ENCODE measurements at regions of chr1 and their contacts with region 1.

Region 1: DNA sequence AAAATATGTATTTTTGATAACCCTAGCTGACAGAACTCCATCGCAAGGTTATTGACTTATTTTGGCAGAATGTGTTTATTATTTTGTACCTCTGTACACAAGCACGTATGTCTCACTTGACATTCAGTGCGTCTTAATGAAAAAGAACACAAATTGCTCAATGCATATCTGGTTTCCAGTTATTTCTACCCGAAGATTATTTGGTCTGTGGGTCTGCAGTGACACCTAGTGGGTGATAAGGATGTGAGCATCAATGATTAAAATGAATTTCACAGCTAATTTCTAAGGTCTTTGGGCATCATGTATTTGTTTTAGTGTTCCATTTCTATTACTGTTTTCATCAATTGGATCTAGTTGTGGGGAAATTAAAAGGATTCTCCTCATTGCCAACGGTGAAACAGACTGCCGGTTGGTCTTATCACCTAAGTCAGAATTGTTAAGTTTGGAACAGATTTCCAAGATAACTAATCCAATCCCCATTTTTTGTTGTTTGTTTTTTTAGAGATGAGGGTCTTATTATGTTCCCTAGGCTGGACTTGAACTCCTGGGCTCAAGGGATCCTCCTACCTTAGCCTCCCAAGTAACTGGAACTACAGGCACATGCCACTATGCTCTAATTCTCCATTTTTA is 13.9 kb downstream of the DDX20 start:
- DNase-seq: peak; percentile 48
- ATAC-seq: peak; percentile 64
- H3K4me3 ChIP-seq: no peak overlapping the region
- H3K27ac ChIP-seq: no peak overlapping the region
- H3K4me1 ChIP-seq: no peaks in the 10 kb centered on the region
- H3K27me3 ChIP-seq: no peaks in the 10 kb centered on the region
- CTCF ChIP-seq: peak; percentile 67 to 90 (median 72)
- POLR2A ChIP-seq: no peak
- RAD21 ChIP-seq: peak; percentile 84

Region 2: DNA sequence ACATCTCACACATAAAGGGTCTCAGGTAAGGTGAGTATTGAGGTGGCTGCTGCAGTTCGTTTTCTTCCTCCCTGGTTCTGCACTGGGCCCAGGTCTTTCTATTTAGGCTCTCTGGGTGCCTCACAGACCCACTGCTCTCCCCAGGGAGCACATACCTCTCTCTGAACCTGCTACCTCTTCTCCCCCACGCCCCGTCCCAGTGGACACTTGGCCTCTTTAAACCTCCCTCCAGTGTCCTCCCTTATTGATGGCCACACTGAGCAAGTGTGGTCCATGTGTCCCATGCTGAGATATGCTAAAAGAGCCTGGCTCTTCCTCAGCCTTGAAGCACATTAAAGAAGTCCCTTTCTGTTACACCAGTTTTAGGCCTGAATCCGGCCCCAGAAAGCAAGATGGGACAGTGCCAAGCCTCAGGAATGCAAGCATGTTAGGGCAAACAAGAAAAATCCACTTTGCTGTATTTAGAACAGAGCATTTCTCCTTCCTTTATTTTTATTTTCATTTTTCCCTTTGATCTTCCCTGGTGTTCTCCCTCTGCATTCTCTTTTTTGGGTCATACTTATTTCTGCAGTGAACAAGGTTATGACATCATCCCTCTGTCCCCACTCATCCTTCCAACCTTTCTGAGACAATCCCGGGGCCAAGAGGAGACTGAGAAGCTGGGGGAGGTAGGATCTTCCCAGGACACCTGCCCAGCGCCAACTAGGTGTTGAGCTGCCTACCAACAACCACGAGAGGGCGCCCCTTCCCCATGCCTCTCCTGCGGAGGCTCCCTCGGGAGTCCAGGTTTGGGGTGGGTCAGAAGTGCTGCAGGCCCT is 547.1 kb before region 1 on chr1:
- CTCF ChIA-PET with region 1: interaction called, 4 read pairs
- POLR2A ChIA-PET with region 1: no interaction called
- RAD21 ChIA-PET with region 1: no interaction called
- intact Hi-C with region 1: loop called (anchors 10 kb)
- DNase-seq: peak; percentile 70
- ATAC-seq: peak; percentile 100
- H3K4me3 ChIP-seq: no peak overlapping the region
- H3K27ac ChIP-seq: no peak overlapping the region
- H3K4me1 ChIP-seq: peaks cover 3 to 5% of the 10 kb centered on the region in 2 experiments; a peak in 2 of 4 replicates
- H3K27me3 ChIP-seq: no peaks in the 10 kb centered on the region
- CTCF ChIP-seq: peak; percentile 90 to 98 (median 95)
- POLR2A ChIP-seq: no peak
- RAD21 ChIP-seq: peak; percentile 98

Region 3: GRCh38 chr1:111481387-111482221 is 288.0 kb before region 1 on chr1:
- CTCF ChIA-PET with region 1: interaction called, 41 read pairs
- POLR2A ChIA-PET with region 1: no interaction called
- RAD21 ChIA-PET with region 1: no interaction called
- intact Hi-C with region 1: loop called (anchors 5 kb)
- DNase-seq: peak; percentile 42
- ATAC-seq: peak; percentile 97
- H3K4me3 ChIP-seq: no peak overlapping the region
- H3K27ac ChIP-seq: no peak overlapping the region
- H3K4me1 ChIP-seq: no peaks in the 10 kb centered on the region
- H3K27me3 ChIP-seq: no peaks in the 10 kb centered on the region
- CTCF ChIP-seq: peak; percentile 59 to 84 (median 67)
- POLR2A ChIP-seq: no peak
- RAD21 ChIP-seq: peak; percentile 88

Region 4: DNA sequence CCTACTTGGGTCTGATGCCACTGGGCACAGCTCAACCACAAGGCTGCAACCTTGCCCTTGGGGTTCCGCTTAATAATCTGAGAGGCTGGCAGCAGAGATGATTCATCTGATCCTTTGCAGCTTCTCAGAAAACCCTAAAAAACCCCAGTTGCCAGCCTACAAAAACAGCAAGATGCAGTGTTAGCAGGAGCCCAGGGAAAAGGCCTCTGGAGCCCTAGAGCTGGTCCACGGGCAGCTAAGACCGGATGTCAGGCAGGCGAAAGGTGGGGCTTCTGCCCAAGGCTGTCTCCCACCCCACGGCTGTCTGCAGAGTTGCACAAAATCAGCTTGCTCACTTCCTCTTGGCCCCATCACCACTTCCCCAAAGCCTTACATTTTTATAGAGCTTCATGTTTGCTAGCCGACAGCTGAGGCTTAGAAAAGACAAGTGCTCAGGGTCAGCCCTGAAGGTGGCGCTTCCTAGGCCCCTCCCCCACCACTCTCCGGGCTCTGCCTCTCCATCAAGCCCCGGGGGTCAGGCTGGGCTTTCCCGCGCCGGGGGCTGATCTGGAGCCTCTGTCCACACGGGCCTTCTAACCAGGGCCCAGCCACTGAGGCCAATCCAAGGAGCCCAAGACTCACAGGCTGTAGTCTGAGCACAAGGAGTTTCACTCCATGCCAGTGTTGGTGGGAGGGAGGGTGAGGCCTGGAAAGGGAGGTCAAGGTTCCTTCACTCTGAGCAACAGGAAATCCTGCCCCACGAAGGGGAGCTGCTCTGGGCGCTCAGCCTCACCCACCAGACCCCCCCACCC is 262.0 kb before region 1 on chr1:
- CTCF ChIA-PET with region 1: interaction called, 33 read pairs
- POLR2A ChIA-PET with region 1: no interaction called
- RAD21 ChIA-PET with region 1: interaction called in 1 of 2 experiments, 5 read pairs
- intact Hi-C with region 1: no loop called
- DNase-seq: no peak
- ATAC-seq: peak; percentile 80
- H3K4me3 ChIP-seq: peak overlapping the region; percentile 2 to 49; a peak in 3 of 4 replicates
- H3K27ac ChIP-seq: peak overlapping the region; percentile 63
- H3K4me1 ChIP-seq: peaks cover 9 to 16% of the 10 kb centered on the region in 2 experiments
- H3K27me3 ChIP-seq: no peaks in the 10 kb centered on the region
- CTCF ChIP-seq: no peak; a peak in 1 of 6 replicates
- POLR2A ChIP-seq: no peak
- RAD21 ChIP-seq: no peak

Region 5: GRCh38 chr1:111656086-111657017 is 113.3 kb before region 1 on chr1:
- CTCF ChIA-PET with region 1: no interaction called
- POLR2A ChIA-PET with region 1: no interaction called
- RAD21 ChIA-PET with region 1: no interaction called
- intact Hi-C with region 1: loop called (anchors 2 kb)
- DNase-seq: peak; percentile 57
- ATAC-seq: peak; percentile 62; the same call in 1 of the 2 replicates
- H3K4me3 ChIP-seq: no peak overlapping the region
- H3K27ac ChIP-seq: no peak overlapping the region
- H3K4me1 ChIP-seq: no peaks in the 10 kb centered on the region
- H3K27me3 ChIP-seq: no peaks in the 10 kb centered on the region
- CTCF ChIP-seq: peak; percentile 48 to 75 (median 69)
- POLR2A ChIP-seq: no peak
- RAD21 ChIP-seq: peak; percentile 84

Region 6: DNA sequence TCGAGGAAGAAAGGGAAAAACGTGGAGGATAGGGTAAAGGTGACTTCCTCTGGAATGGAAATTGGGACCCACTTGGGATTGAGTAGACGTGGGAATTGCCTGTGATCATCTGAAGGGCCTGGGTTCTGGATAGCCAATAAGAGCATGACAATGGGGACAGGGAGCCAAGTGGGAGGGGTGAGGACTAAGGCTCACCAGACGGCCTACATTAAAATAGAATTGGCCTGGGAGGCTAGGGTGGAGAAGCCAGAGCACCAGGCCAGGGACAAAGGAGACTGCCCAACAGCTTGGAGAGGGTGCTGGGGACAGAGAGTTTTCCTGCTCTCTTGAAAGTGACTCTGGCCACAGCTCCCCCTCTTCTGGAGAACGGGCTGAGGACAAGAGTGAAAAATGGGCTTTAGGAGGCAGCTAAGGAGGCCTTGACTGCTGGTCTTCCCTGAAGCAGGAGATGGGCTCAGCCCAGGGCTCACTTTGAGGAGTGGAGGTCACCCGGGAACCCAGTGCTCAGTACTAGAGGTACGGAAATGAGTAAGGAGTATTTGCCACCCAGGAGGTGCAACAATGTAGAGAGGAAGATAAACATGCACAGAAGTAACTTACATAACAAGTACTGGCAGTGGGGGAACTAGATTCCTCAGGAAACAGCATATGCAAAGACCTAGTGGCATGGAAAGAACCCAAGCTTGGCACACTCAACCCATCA is 49.2 kb before region 1 on chr1:
- CTCF ChIA-PET with region 1: interaction called, 38 read pairs
- POLR2A ChIA-PET with region 1: no interaction called
- RAD21 ChIA-PET with region 1: interaction called in 1 of 2 experiments, 3 read pairs
- intact Hi-C with region 1: loop called (anchors 1 kb)
- DNase-seq: no peak
- ATAC-seq: no peak; the same call in 1 of the 2 replicates
- H3K4me3 ChIP-seq: no peak overlapping the region
- H3K27ac ChIP-seq: no peak overlapping the region
- H3K4me1 ChIP-seq: no peaks in the 10 kb centered on the region
- H3K27me3 ChIP-seq: no peaks in the 10 kb centered on the region
- CTCF ChIP-seq: no peak
- POLR2A ChIP-seq: no peak
- RAD21 ChIP-seq: no peak

Region 7: DNA sequence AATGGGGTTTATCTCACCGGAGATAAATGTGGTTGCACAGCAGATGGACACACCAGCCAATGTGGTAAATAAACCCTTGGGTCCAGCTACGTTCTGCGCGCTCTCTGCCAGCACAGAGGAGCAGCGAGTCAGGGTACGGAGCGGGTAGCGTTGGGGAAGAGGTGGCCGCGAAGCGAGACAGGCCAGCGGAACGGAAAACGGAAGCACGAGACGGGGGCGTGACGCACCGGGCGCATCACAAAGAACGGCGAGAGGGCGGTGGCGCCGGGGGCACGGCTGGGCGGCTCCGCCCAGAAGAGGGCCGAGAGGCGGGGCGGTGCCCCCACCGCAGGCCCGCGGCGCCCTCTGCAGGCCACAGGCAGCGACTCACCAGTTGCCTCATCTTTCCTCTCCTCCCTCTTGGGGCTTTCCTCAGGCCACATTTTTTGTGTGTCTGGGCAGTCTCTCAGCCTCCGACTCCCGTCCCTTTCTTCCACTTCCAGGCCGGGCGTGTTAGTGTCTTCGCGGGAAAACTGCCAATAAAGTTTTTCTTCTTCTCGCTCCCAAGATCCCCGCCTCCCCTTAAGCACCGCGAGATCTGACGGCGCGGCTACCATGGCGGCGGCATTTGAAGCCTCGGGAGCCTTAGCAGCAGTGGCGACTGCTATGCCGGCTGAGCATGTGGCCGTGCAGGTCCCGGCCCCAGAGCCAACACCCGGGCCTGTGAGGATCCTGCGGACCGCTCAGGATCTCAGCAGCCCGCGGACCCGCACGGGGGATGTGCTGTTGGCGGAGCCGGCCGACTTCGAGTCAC is 14.1 kb before region 1 on chr1 and contains the start of gene DDX20:
- CTCF ChIA-PET with region 1: interaction called, 10 read pairs
- POLR2A ChIA-PET with region 1: no interaction called
- RAD21 ChIA-PET with region 1: interaction called in 1 of 2 experiments, 3 read pairs
- intact Hi-C with region 1: no loop called
- DNase-seq: peak; percentile 92
- ATAC-seq: peak; percentile 89
- H3K4me3 ChIP-seq: peak within 1 kb of the TSS; percentile 68 to 83
- H3K27ac ChIP-seq: peak within 1 kb of the TSS; percentile 89
- H3K4me1 ChIP-seq: peaks cover 11 to 18% of the 10 kb centered on the region in 2 experiments
- H3K27me3 ChIP-seq: no peaks in the 10 kb centered on the region
- CTCF ChIP-seq: peak; percentile 66 to 89 (median 85); a peak in 5 of 6 replicates
- POLR2A ChIP-seq: peak; percentile 70
- RAD21 ChIP-seq: peak; percentile 70
- total RNA-seq, gene DDX20: 14.9 TPM